Activated CD4-positive, alpha-beta T cell treated with anti-CD3 and anti-CD28 coated beads, Interleukin-2, amount 10 ng/mL, durations not matched to agents 24 days and 14 days (primary cell): ENCODE measurements at regions of chr3 and their contacts with region 1.

Region 1: GRCh38 chr3:197029511-197030167 is at the start of gene MELTF:
- DNase-seq: peak; percentile 95
- H3K4me3 Mint-ChIP-seq: peak within 1 kb of the TSS; percentile 83
- H3K27ac Mint-ChIP-seq: peak within 1 kb of the TSS; percentile 48
- H3K4me1 Mint-ChIP-seq: peaks cover 4% of the 10 kb centered on the region
- H3K27me3 Mint-ChIP-seq: no peaks in the 10 kb centered on the region
- total RNA-seq, gene MELTF: 8.8 and 10.6 TPM in 2 replicates

Region 2: GRCh38 chr3:196837819-196838420 is 191.7 kb before region 1 on chr3:
- intact Hi-C with region 1: loop called (anchors 2 kb)
- DNase-seq: peak; percentile 91
- H3K4me3 Mint-ChIP-seq: no peak overlapping the region
- H3K27ac Mint-ChIP-seq: no peak overlapping the region
- H3K4me1 Mint-ChIP-seq: peaks cover 3% of the 10 kb centered on the region
- H3K27me3 Mint-ChIP-seq: no peaks in the 10 kb centered on the region

Region 3: GRCh38 chr3:197002701-197003454 is 26.8 kb before region 1 on chr3:
- intact Hi-C with region 1: loop called (anchors 1 kb)
- DNase-seq: peak; percentile 95
- H3K4me3 Mint-ChIP-seq: no peak overlapping the region
- H3K27ac Mint-ChIP-seq: no peak overlapping the region
- H3K4me1 Mint-ChIP-seq: peaks cover 11% of the 10 kb centered on the region
- H3K27me3 Mint-ChIP-seq: peaks cover 2% of the 10 kb centered on the region

Region 4: DNA sequence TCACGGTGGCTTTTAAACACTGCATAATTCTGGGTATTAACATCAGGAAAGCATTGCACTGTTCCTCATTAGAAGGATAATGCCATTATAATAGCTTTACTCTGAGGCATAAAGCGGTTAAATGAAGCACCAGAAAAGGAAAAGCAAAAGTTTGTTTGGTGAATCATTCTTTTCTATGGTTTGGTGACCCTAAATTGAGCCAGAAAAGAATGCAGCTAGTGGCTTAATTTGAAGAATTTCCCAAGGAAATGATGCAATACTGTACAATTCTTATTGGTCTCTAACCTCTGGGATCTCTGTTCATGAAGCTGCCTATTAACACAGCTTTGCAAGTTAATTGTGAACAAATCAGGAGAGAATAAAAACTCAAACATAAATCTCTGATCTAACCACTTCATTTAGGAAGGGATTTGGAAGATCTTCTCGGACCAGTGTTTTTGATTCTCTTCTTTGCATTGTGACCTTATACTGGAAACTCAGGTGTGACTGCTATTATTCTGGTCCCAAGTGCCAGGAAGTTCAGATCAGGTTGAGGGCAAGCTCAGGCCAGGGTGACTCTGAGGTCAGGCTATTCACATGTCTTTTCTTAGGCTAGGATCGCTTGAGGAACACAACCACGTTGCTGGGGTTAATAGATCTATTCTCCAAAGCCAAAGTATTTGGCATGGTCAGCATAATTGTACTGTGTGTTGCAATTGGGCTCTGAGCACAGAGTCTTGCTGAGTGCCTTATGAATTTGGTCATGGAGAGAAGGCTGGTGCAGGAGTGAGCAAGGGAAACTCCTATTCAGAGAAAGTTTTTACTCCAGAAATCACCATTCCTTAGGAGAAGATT is 280.1 kb after region 1 on chr3:
- intact Hi-C with region 1: no loop called
- DNase-seq: no peak
- H3K4me3 Mint-ChIP-seq: peak overlapping the region; percentile 8
- H3K27ac Mint-ChIP-seq: peak overlapping the region; percentile 49
- H3K4me1 Mint-ChIP-seq: peaks cover 37% of the 10 kb centered on the region
- H3K27me3 Mint-ChIP-seq: peaks cover 16% of the 10 kb centered on the region